ENCODE measurements at regions of chr15 and their contacts with region 1.

Region 1: DNA sequence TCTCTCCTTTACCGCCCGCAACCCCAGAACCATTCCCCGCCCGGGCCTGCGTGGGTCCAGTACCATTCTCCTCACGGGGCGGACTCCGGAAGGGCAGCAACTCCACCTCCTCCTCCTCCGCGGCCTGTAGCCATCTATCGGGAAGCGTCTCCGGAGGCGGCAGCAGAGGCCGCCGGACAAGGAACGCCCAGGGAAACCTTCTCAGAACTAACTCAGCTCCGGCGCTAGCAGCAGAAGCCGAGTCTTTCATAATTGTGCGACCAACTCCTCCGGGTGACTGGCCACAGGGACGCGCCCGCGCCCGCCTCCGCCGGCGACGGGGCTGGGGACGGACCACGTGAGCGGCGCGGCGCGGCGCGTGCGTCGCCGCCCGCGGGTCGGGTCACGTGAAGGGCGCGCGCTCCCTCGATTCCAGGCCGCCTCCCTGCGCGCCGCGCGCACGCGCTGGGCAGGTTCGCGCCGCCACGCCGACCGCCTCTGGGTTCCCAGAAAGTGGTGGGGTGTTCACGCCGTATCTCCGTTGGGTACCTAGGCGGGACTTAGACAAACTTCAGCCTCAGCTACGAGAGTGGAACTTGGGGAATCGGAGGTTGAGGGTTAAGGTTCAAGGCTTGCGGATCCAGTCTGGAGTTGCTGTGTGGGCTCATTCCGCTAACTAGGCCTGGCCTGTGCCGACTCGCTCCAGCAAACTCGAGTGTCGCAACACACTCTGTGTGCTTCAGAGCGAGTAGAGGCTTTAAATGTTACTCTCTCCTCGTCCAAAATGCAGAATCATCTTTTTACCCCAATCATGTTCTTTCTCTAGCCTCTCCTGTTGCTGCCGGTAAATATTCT is at the start of gene TRPM7:
- DNase-seq: peak; percentile 74 to 97 (median 84)
- ATAC-seq: peak; percentile 76
- H3K4me3 ChIP-seq: peak within 1 kb of the TSS; percentile 81
- H3K4me3 Mint-ChIP-seq: peak within 1 kb of the TSS; percentile 100
- H3K27ac ChIP-seq: peak within 1 kb of the TSS; percentile 92 to 95
- H3K27ac Mint-ChIP-seq: peak within 1 kb of the TSS; percentile 98
- H3K4me1 ChIP-seq: peaks cover 39% of the 10 kb centered on the region
- H3K4me1 Mint-ChIP-seq: peaks cover 62% of the 10 kb centered on the region
- H3K27me3 ChIP-seq: no peaks in the 10 kb centered on the region
- H3K27me3 Mint-ChIP-seq: no peaks in the 10 kb centered on the region
- CTCF ChIP-seq: no peak
- total RNA-seq, gene TRPM7: 29.0 to 30.0 TPM

Region 2: GRCh38 chr15:48877630-48878595 is 1808.8 kb before region 1 on chr15 and contains the start of gene EID1:
- CTCF ChIA-PET with region 1: no interaction called
- POLR2A ChIA-PET with region 1: no interaction called
- intact Hi-C with region 1: loop called in 1 of 2 experiments (anchors 10 kb)
- DNase-seq: peak; percentile 84 to 98 (median 90)
- ATAC-seq: peak; percentile 93
- H3K4me3 ChIP-seq: peak within 1 kb of the TSS; percentile 92
- H3K4me3 Mint-ChIP-seq: peak within 1 kb of the TSS; percentile 94
- H3K27ac ChIP-seq: peak within 1 kb of the TSS; percentile 68 to 78
- H3K27ac Mint-ChIP-seq: peak within 1 kb of the TSS; percentile 95
- H3K4me1 ChIP-seq: peaks cover 7% of the 10 kb centered on the region
- H3K4me1 Mint-ChIP-seq: peaks cover 23% of the 10 kb centered on the region
- H3K27me3 ChIP-seq: no peaks in the 10 kb centered on the region
- H3K27me3 Mint-ChIP-seq: peaks cover 25% of the 10 kb centered on the region
- CTCF ChIP-seq: no peak
- total RNA-seq, gene EID1: 41.0 to 45.3 TPM

Region 3: DNA sequence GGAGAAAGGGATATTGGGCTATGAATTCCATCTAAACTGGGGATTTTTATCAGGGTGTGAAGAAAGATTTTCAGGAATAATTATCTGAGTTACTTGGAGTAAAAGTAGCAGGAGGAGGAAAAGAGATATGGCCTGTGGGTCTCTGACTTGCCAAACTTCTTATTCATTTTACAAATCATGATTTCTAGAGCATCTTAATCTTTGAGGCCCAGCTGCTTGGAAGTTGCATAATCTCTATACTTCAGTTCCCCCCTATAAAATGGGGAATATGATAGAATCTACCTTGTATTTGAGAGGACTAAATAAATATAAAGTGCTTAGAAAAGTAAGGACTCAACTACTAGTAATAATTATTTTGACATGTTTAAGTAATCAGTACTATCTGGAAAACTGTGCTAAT is 320.7 kb before region 1 on chr15:
- CTCF ChIA-PET with region 1: no interaction called
- POLR2A ChIA-PET with region 1: no interaction called
- intact Hi-C with region 1: loop called in 1 of 2 experiments (anchors 5 kb)
- DNase-seq: no peak
- ATAC-seq: no peak
- H3K4me3 ChIP-seq: no peak overlapping the region
- H3K4me3 Mint-ChIP-seq: no peak overlapping the region
- H3K27ac ChIP-seq: no peak overlapping the region
- H3K27ac Mint-ChIP-seq: peak overlapping the region; percentile 17
- H3K4me1 ChIP-seq: peaks cover 3% of the 10 kb centered on the region
- H3K4me1 Mint-ChIP-seq: peaks cover 18% of the 10 kb centered on the region
- H3K27me3 ChIP-seq: no peaks in the 10 kb centered on the region
- H3K27me3 Mint-ChIP-seq: no peaks in the 10 kb centered on the region
- CTCF ChIP-seq: no peak

Region 4: GRCh38 chr15:50726315-50726714 is 39.6 kb after region 1 on chr15:
- CTCF ChIA-PET with region 1: no interaction called
- POLR2A ChIA-PET with region 1: no interaction called
- intact Hi-C with region 1: no loop called
- DNase-seq: no peak
- ATAC-seq: no peak
- H3K4me3 ChIP-seq: no peak overlapping the region
- H3K4me3 Mint-ChIP-seq: no peak overlapping the region
- H3K27ac ChIP-seq: no peak overlapping the region
- H3K27ac Mint-ChIP-seq: no peak overlapping the region
- H3K4me1 ChIP-seq: no peaks in the 10 kb centered on the region
- H3K4me1 Mint-ChIP-seq: no peaks in the 10 kb centered on the region
- H3K27me3 ChIP-seq: no peaks in the 10 kb centered on the region
- H3K27me3 Mint-ChIP-seq: no peaks in the 10 kb centered on the region
- CTCF ChIP-seq: no peak

Region 5: DNA sequence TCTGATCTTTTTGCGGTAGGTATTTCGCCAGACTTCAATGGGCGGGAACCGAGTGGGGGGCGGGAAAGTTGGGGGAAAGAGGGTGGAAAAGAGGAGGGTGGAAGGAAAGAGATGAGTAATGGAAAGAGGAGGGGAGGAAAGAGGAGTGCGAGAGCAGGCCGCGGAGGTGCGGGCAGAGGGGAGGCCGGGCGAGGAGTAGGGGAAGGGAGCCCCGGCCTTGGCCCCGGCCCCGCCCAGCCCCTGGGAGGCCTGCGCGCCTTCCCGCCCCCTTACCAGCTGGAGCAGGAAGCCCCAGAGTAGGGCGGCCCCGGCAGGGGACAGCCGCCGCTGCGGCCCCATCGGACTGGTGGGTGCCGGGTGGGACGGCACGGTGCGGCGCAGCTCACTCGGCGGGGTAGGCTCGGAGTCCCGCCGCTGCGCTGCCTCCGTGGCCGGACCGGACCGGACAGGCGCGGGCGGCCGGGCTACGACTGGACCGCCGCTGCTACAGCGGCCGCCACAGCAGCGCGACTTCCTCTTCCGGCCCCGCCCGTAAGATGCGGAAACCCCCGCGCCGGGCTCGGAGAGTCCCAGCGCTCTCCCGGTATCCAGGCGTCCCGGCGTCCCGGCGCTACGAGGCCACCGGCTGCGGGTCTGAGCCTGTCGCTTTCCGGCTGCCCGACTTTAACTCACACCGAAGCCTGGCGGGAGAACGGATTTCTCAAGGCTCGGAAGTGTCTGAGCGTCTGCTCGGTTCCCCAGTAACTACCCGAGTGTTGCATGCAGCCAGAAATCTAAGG is 78.7 kb after region 1 on chr15 and contains the start of gene SPPL2A:
- CTCF ChIA-PET with region 1: no interaction called
- POLR2A ChIA-PET with region 1: interaction called, 16 read pairs
- intact Hi-C with region 1: loop called (anchors 2 kb)
- DNase-seq: peak; percentile 47 to 88 (median 69)
- ATAC-seq: peak; percentile 89
- H3K4me3 ChIP-seq: peak within 1 kb of the TSS; percentile 72
- H3K4me3 Mint-ChIP-seq: peak within 1 kb of the TSS; percentile 94
- H3K27ac ChIP-seq: peak within 1 kb of the TSS; percentile 82 to 88
- H3K27ac Mint-ChIP-seq: peak within 1 kb of the TSS; percentile 84
- H3K4me1 ChIP-seq: peaks cover 25% of the 10 kb centered on the region
- H3K4me1 Mint-ChIP-seq: peaks cover 44% of the 10 kb centered on the region
- H3K27me3 ChIP-seq: no peaks in the 10 kb centered on the region
- H3K27me3 Mint-ChIP-seq: no peaks in the 10 kb centered on the region
- CTCF ChIP-seq: no peak
- total RNA-seq, gene SPPL2A: 26.6 to 30.7 TPM

Region 6: DNA sequence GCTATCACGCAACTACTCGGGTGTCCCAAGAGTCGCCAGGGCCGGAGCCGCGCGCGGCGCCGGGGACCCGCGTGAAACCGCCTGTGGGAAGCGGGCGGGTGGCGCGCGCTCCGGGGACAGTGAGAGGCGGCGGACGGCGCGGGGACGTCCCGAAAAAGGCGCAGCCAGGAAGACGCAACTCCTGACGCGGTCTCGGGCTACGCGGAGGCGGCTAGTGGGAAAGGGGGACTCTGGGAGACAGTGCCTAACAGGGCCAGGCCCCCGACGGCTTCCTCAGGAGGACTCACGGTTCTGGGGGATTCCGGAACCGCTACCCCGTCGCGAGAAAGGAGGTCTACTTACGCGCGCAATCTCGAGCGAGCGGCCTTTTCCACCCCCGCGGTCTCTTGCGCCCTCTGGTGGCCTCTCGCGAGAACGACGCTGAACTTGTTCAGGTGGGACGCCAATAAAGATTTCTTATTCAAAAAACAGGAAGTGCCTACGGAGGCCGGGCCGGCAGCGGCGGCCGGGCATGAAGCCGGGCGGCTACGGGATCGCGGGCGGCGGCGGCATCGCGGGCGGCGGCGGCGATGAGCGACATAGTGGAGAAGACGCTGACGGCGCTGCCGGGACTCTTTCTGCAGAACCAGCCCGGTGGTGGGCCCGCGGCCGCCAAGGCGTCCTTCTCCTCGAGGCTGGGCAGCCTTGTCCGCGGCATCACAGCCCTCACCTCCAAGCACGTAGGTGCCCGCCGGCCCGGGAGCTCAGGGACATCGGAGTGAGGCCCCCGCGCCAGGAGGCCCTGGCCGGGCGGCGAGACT is 221.7 kb after region 1 on chr15 and contains the start of gene AP4E1:
- CTCF ChIA-PET with region 1: no interaction called
- POLR2A ChIA-PET with region 1: interaction called, 8 read pairs
- intact Hi-C with region 1: loop called in 1 of 2 experiments (anchors 1 kb)
- DNase-seq: peak; percentile 89 to 97 (median 93)
- ATAC-seq: peak; percentile 40
- H3K4me3 ChIP-seq: peak within 1 kb of the TSS; percentile 80
- H3K4me3 Mint-ChIP-seq: peak within 1 kb of the TSS; percentile 94
- H3K27ac ChIP-seq: peak within 1 kb of the TSS; percentile 91 to 100
- H3K27ac Mint-ChIP-seq: peak within 1 kb of the TSS; percentile 98
- H3K4me1 ChIP-seq: peaks cover 19% of the 10 kb centered on the region
- H3K4me1 Mint-ChIP-seq: peaks cover 29% of the 10 kb centered on the region
- H3K27me3 ChIP-seq: no peaks in the 10 kb centered on the region
- H3K27me3 Mint-ChIP-seq: no peaks in the 10 kb centered on the region
- CTCF ChIP-seq: peak; percentile 87
- total RNA-seq, gene AP4E1: 6.3 to 6.6 TPM

Region 7: DNA sequence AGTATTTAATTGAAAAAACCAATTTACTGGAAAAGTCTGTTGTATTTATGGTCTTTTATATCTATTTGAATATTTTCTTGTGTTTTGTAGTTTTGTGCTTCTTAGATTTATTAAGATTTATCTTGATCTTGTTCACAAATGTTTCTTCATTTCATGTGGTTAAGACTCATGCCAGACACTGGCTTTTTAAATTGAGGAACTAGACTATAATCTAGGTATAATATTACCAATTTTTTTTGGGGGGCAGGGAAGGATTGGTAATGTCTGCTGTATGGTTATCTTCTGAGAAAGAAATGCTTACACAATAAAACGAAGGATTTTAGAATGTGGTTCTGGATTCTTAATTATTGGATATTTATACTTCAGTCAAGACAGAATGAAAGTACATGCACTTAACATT is 246.7 kb after region 1 on chr15:
- CTCF ChIA-PET with region 1: no interaction called
- POLR2A ChIA-PET with region 1: no interaction called
- intact Hi-C with region 1: no loop called
- DNase-seq: no peak
- ATAC-seq: no peak
- H3K4me3 ChIP-seq: no peak overlapping the region
- H3K4me3 Mint-ChIP-seq: no peak overlapping the region
- H3K27ac ChIP-seq: no peak overlapping the region
- H3K27ac Mint-ChIP-seq: no peak overlapping the region
- H3K4me1 ChIP-seq: no peaks in the 10 kb centered on the region
- H3K4me1 Mint-ChIP-seq: no peaks in the 10 kb centered on the region
- H3K27me3 ChIP-seq: no peaks in the 10 kb centered on the region
- H3K27me3 Mint-ChIP-seq: no peaks in the 10 kb centered on the region
- CTCF ChIP-seq: no peak